Esophagus muscularis mucosa (tissue), 4 donors: ENCODE measurements at regions of chr10 and their contacts with region 1.

Region 1: GRCh38 chr10:25113191-25114035 is 61.4 kb upstream of the GPR158 start:
- DNase-seq: peak; percentile 91
- H3K4me3 ChIP-seq: no peak overlapping the region
- H3K27ac ChIP-seq: no peak overlapping the region
- H3K4me1 ChIP-seq: peaks cover 0 to 8% (median 6%) of the 10 kb centered on the region in 4 donors
- H3K27me3 ChIP-seq: peaks cover 0 to 24% (median 0%) of the 10 kb centered on the region in 4 donors
- CTCF ChIP-seq: peak; percentile 42 to 66 (median 52)
- EP300 ChIP-seq: no peak
- POLR2A ChIP-seq: no peak

Region 2: DNA sequence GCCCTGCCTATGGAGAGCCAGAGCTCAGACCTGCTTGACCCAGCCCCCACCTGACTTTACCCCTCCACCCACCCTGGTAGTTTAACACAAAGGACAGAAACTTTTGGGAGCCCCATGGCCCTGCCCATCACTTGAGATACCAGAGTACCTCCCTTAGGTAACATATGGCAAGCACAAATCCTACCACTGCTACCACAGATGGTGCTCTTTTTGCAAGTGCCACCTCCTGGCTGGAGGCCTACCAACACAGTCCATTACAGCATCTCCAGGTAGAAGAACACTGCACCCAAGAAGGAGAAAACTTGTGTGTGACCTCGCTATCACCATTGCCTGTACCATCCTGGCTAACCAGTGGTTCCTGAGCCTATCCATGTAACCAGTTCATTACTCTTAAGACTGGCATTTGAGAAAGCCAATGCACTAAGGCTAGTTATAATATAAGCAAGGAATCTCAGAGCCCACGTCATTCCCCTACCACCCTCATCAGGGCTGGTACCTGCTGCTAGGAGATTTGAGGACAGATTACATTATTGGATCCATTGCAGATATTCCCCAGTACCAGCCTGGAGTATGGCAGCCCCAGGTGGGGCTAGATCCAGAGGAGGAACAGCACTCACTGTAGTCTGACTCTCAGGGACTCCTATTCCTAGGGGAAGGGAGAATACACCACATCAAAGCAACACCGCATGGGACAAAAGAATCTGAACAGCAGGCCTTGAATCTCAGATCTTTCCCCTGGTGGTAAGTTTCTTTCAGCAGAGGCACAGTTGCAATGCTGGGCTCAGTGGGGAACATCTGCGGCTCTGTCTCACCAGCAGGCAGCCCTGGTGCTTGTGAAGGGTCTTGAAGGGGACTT is 278.9 kb before region 1 on chr10:
- intact Hi-C with region 1: no loop called
- DNase-seq: no peak
- H3K4me3 ChIP-seq: no peak overlapping the region
- H3K27ac ChIP-seq: no peak overlapping the region
- H3K4me1 ChIP-seq: no peaks in the 10 kb centered on the region
- H3K27me3 ChIP-seq: no peaks in the 10 kb centered on the region
- CTCF ChIP-seq: no peak
- EP300 ChIP-seq: no peak
- POLR2A ChIP-seq: no peak

Region 3: GRCh38 chr10:25157650-25158049 is 44.2 kb after region 1 on chr10:
- intact Hi-C with region 1: no loop called
- DNase-seq: no peak
- H3K4me3 ChIP-seq: no peak overlapping the region
- H3K27ac ChIP-seq: no peak overlapping the region
- H3K4me1 ChIP-seq: no peaks in the 10 kb centered on the region
- H3K27me3 ChIP-seq: no peaks in the 10 kb centered on the region
- CTCF ChIP-seq: no peak
- EP300 ChIP-seq: no peak
- POLR2A ChIP-seq: no peak

Region 4: GRCh38 chr10:25226775-25227682 is 113.6 kb after region 1 on chr10:
- intact Hi-C with region 1: loop called (anchors 5 kb)
- DNase-seq: no peak
- H3K4me3 ChIP-seq: no peak overlapping the region
- H3K27ac ChIP-seq: no peak overlapping the region
- H3K4me1 ChIP-seq: no peaks in the 10 kb centered on the region
- H3K27me3 ChIP-seq: peaks cover 0 to 3% (median 0%) of the 10 kb centered on the region in 4 donors
- CTCF ChIP-seq: peak in 2 of 3 experiments; percentile 33 to 47
- EP300 ChIP-seq: no peak
- POLR2A ChIP-seq: no peak